ENCODE measurements at regions of chr17 and their contacts with region 1.

Region 1: GRCh38 chr17:40417609-40418427 is at the start of gene TOP2A:
- DNase-seq: peak; percentile 100
- H3K4me3 ChIP-seq: peak within 1 kb of the TSS; percentile 72 to 91 (median 73)
- H3K27ac ChIP-seq: peak within 1 kb of the TSS; percentile 6
- H3K4me1 ChIP-seq: peaks cover 25% of the 10 kb centered on the region
- H3K27me3 ChIP-seq: no peaks in the 10 kb centered on the region
- CTCF ChIP-seq: no peak
- POLR2A ChIP-seq: peak; percentile 67
- total RNA-seq, gene TOP2A: 149 and 160 TPM in 2 replicates

Region 2: GRCh38 chr17:40209404-40210093 is 208.3 kb before region 1 on chr17:
- CTCF ChIA-PET with region 1: no interaction called
- POLR2A ChIA-PET with region 1: no interaction called
- dilution Hi-C with region 1: no loop called
- intact Hi-C with region 1: loop called (anchors 10 kb)
- DNase-seq: no peak
- H3K4me3 ChIP-seq: no peak overlapping the region
- H3K27ac ChIP-seq: no peak overlapping the region
- H3K4me1 ChIP-seq: no peaks in the 10 kb centered on the region
- H3K27me3 ChIP-seq: no peaks in the 10 kb centered on the region
- CTCF ChIP-seq: no peak
- POLR2A ChIP-seq: no peak

Region 3: GRCh38 chr17:40303009-40303657 is 114.7 kb before region 1 on chr17:
- CTCF ChIA-PET with region 1: interaction called, 8 read pairs
- POLR2A ChIA-PET with region 1: no interaction called
- dilution Hi-C with region 1: no loop called
- intact Hi-C with region 1: loop called (anchors 5 kb)
- DNase-seq: peak; percentile 85
- H3K4me3 ChIP-seq: no peak overlapping the region
- H3K27ac ChIP-seq: no peak overlapping the region
- H3K4me1 ChIP-seq: peaks cover 19% of the 10 kb centered on the region
- H3K27me3 ChIP-seq: no peaks in the 10 kb centered on the region
- CTCF ChIP-seq: peak; percentile 55 to 66
- POLR2A ChIP-seq: no peak

Region 4: GRCh38 chr17:40331743-40332641 is 85.8 kb before region 1 on chr17:
- CTCF ChIA-PET with region 1: no interaction called
- POLR2A ChIA-PET with region 1: no interaction called
- dilution Hi-C with region 1: no loop called
- intact Hi-C with region 1: no loop called
- DNase-seq: peak; percentile 73
- H3K4me3 ChIP-seq: no peak overlapping the region
- H3K27ac ChIP-seq: peak overlapping the region; percentile 61
- H3K4me1 ChIP-seq: peaks cover 38% of the 10 kb centered on the region
- H3K27me3 ChIP-seq: no peaks in the 10 kb centered on the region
- CTCF ChIP-seq: no peak
- POLR2A ChIP-seq: peak; percentile 30

Region 5: GRCh38 chr17:40362696-40363110 is 55.1 kb before region 1 on chr17:
- CTCF ChIA-PET with region 1: interaction called, 9 read pairs
- POLR2A ChIA-PET with region 1: no interaction called
- dilution Hi-C with region 1: no loop called
- intact Hi-C with region 1: loop called (anchors 1 kb)
- DNase-seq: peak; percentile 71
- H3K4me3 ChIP-seq: peak overlapping the region in 1 of 3 experiments; percentile 41
- H3K27ac ChIP-seq: no peak overlapping the region
- H3K4me1 ChIP-seq: peaks cover 7% of the 10 kb centered on the region
- H3K27me3 ChIP-seq: no peaks in the 10 kb centered on the region
- CTCF ChIP-seq: peak; percentile 85 to 88
- POLR2A ChIP-seq: no peak

Region 6: DNA sequence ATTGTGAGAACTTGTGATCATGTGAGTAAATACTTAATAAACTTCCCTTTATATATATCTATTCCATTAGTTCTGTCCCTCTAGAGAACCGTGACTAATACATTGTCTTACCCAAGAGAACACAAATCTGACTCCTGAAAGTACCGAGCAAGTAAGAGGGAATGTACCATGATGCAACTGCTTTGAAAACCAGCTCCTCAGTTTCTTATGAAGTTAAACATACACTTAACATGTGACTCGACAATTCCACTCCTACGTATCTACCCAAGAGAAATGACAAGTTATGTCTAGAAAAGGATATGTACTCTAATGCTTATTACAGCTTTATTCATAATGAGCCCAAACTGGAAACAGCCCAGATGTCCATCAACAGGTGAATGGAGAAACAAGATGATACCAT is 44.5 kb before region 1 on chr17:
- CTCF ChIA-PET with region 1: no interaction called
- POLR2A ChIA-PET with region 1: no interaction called
- dilution Hi-C with region 1: no loop called
- intact Hi-C with region 1: no loop called
- DNase-seq: no peak
- H3K4me3 ChIP-seq: no peak overlapping the region
- H3K27ac ChIP-seq: no peak overlapping the region
- H3K4me1 ChIP-seq: no peaks in the 10 kb centered on the region
- H3K27me3 ChIP-seq: no peaks in the 10 kb centered on the region
- CTCF ChIP-seq: no peak
- POLR2A ChIP-seq: no peak

Region 7: DNA sequence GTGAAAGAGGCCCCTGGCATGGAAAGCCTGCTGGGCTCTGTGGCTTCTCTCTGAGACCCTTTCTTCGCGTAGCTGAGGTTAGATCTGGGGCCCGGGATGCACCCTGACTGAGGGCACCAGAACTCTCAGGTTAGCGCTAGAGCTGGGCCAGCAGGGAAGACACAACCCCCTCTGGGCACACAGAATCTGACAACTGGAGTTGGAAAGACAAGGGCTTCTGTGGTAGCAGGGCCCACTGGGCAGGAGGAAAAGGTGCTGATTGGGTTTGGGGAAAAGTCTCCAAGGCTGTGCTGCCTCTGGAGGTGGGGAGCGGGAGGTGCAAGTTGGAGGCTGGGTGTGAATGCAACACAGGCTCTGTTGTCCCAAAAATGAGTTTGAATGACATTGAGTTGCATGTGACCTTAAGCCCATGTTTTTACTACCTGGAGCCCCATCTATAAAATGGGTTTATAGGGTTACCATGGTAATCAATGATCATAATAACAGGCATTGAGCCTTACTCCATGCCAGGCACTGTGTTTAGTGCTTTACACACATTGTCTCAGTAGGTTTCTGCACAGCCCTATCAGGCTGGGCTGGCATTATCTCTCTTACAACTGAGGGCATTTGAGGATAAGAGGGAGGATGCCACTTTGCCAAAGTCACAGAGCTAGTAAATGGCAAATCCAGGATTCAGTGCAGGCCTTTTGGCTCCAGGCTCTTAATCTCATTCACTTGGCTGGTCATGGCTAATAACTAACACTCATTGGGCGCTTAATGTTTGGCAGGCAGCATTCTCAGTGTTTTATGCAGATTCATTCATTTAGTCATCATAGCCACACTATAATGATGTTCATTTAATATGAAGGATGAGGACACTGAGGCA is 16.0 kb after region 1 on chr17:
- CTCF ChIA-PET with region 1: interaction called, 10 read pairs
- POLR2A ChIA-PET with region 1: no interaction called
- dilution Hi-C with region 1: no loop called
- intact Hi-C with region 1: no loop called
- DNase-seq: no peak
- H3K4me3 ChIP-seq: no peak overlapping the region
- H3K27ac ChIP-seq: no peak overlapping the region
- H3K4me1 ChIP-seq: no peaks in the 10 kb centered on the region
- H3K27me3 ChIP-seq: peaks cover 0 to 2% of the 10 kb centered on the region in 2 experiments
- CTCF ChIP-seq: peak; percentile 38 to 55
- POLR2A ChIP-seq: no peak

Region 8: DNA sequence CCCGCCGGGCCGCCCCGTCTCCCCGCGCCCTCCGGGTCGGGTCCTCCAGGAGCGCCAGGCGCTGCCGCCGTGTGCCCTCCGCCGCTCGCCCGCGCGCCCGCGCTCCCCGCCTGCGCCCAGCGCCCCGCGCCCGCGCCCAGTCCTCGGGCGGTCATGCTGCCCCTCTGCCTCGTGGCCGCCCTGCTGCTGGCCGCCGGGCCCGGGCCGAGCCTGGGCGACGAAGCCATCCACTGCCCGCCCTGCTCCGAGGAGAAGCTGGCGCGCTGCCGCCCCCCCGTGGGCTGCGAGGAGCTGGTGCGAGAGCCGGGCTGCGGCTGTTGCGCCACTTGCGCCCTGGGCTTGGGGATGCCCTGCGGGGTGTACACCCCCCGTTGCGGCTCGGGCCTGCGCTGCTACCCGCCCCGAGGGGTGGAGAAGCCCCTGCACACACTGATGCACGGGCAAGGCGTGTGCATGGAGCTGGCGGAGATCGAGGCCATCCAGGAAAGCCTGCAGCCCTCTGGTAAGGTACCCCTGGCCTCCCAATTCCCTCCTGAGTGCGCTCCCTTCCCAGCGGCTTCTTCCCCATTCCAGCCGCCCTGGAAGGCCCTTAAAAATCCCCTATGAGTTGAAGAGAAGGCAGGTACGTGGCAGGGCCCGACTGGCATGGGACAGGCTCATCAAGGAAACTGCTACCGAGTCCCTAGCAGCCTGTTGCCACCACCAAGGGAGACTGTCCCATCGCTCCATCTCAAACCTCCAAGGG is 25.9 kb after region 1 on chr17:
- CTCF ChIA-PET with region 1: interaction called, 12 read pairs
- POLR2A ChIA-PET with region 1: interaction called, 7 read pairs
- dilution Hi-C with region 1: no loop called
- intact Hi-C with region 1: loop called (anchors 1 kb)
- DNase-seq: peak; percentile 69
- H3K4me3 ChIP-seq: peak overlapping the region; percentile 51 to 92 (median 58)
- H3K27ac ChIP-seq: peak overlapping the region; percentile 43
- H3K4me1 ChIP-seq: peaks cover 40% of the 10 kb centered on the region
- H3K27me3 ChIP-seq: no peaks in the 10 kb centered on the region
- CTCF ChIP-seq: peak; percentile 45 to 76
- POLR2A ChIP-seq: no peak

Region 9: DNA sequence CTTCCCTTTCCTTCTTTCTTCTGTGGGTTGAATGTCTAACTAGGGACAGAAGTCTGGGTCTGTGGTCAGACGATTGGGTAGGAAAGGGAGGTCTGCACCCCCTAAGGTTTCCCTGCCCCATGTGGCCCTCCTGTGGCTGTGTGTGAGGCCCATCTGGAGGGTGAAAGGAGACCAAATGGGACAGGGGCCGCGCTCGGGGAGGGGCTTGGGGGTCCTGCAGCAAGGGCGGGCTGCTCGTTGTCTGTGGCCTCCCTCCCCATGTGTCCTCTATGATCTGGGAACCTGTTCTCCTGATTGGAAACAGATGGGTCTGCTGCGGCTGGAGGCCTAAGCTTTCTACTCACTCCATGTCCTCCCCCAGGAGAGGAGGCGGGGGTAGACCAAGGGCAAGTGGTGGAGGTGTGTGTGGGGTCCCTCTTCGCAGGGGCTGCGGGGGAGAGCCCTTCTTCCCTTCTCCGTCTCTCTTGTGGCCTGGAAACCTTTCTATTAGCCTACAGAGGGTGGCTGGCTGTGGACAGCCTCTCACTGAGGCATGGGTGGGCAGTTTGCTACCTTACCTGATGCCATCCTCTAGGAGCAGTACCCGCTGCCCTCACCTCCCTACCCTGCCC is 44.0 kb after region 1 on chr17:
- CTCF ChIA-PET with region 1: no interaction called
- POLR2A ChIA-PET with region 1: no interaction called
- dilution Hi-C with region 1: no loop called
- intact Hi-C with region 1: no loop called
- DNase-seq: no peak
- H3K4me3 ChIP-seq: no peak overlapping the region
- H3K27ac ChIP-seq: no peak overlapping the region
- H3K4me1 ChIP-seq: no peaks in the 10 kb centered on the region
- H3K27me3 ChIP-seq: peaks cover 0 to 6% of the 10 kb centered on the region in 2 experiments
- CTCF ChIP-seq: no peak
- POLR2A ChIP-seq: no peak

Region 10: GRCh38 chr17:40536295-40537171 is 118.7 kb after region 1 on chr17:
- CTCF ChIA-PET with region 1: interaction called, 91 read pairs
- POLR2A ChIA-PET with region 1: interaction called, 4 read pairs
- dilution Hi-C with region 1: no loop called
- intact Hi-C with region 1: loop called (anchors 1 kb)
- DNase-seq: peak; percentile 91
- H3K4me3 ChIP-seq: no peak overlapping the region
- H3K27ac ChIP-seq: peak overlapping the region; percentile 70
- H3K4me1 ChIP-seq: peaks cover 43% of the 10 kb centered on the region
- H3K27me3 ChIP-seq: no peaks in the 10 kb centered on the region
- CTCF ChIP-seq: no peak
- POLR2A ChIP-seq: peak; percentile 53